PC-3 (cell line): ENCODE measurements at regions of chr4 and their contacts with region 1.

Region 1: DNA sequence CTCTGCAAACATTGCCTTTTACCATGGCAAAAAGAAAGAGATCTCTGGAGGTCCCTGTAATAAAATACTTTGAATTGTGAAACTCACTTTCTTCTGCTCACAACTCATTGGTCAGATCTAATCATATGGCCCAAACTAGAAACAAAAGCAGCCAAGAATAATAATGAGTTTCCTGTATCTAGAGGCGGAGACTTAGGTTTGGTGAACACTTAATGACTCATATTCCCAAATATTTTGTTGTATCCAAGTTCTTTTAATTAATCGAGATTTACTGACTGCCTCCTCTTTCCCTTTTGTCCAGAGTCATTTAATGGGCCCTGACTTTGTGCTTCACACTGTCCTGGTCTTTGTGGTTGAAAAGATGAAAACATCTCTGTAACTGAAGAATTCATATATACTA is 190.6 kb downstream of the CCSER1 start:
- DNase-seq: peak; percentile 77
- ATAC-seq: peak; percentile 56
- H3K4me3 ChIP-seq: peak overlapping the region; percentile 44; the same call in 1 of the 2 replicates
- H3K27ac ChIP-seq: peak overlapping the region; percentile 97
- H3K4me1 ChIP-seq: peaks cover 42% of the 10 kb centered on the region
- H3K27me3 ChIP-seq: no peaks in the 10 kb centered on the region
- CTCF ChIP-seq: no peak

Region 2: GRCh38 chr4:90181644-90182043 is 136.1 kb before region 1 on chr4:
- CTCF ChIA-PET with region 1: no interaction called
- POLR2A ChIA-PET with region 1: no interaction called
- intact Hi-C with region 1: no loop called
- DNase-seq: peak; percentile 53
- ATAC-seq: peak; percentile 63
- H3K4me3 ChIP-seq: no peak overlapping the region
- H3K27ac ChIP-seq: no peak overlapping the region
- H3K4me1 ChIP-seq: peaks cover 18% of the 10 kb centered on the region; the same call in 1 of the 2 replicates
- H3K27me3 ChIP-seq: no peaks in the 10 kb centered on the region
- CTCF ChIP-seq: no peak

Region 3: DNA sequence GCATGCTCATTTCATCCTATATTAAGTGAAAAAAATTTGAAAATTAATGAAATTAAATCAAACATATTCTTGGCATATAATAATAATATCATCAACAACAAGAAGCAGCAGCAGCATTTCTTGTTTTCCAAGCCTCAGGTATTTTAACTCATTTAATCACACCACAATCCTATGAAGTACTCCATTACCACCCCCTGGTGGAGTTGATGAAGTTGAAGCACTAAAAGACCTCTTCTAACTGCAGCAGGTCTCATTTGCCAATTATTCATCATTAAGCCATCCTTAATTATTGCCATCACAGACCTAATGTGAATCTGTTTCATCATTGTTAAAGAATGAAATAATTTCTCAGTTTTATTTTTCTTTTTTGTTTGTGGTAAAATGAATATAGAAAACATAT is 1184.6 kb after region 1 on chr4:
- CTCF ChIA-PET with region 1: no interaction called
- POLR2A ChIA-PET with region 1: no interaction called
- intact Hi-C with region 1: loop called (anchors 2 kb)
- DNase-seq: peak; percentile 45
- ATAC-seq: no peak
- H3K4me3 ChIP-seq: no peak overlapping the region
- H3K27ac ChIP-seq: no peak overlapping the region
- H3K4me1 ChIP-seq: no peaks in the 10 kb centered on the region
- H3K27me3 ChIP-seq: no peaks in the 10 kb centered on the region
- CTCF ChIP-seq: peak; percentile 55